ENCODE measurements at regions of chr19 and their contacts with region 1.

Region 1: GRCh38 chr19:9342610-9343304 is 18.8 kb downstream of the ZNF559 start:
- DNase-seq: no peak
- H3K4me3 ChIP-seq: no peak overlapping the region
- H3K27ac ChIP-seq: no peak overlapping the region
- H3K4me1 ChIP-seq: no peaks in the 10 kb centered on the region
- H3K27me3 ChIP-seq: no peaks in the 10 kb centered on the region
- CTCF ChIP-seq: no peak

Region 2: DNA sequence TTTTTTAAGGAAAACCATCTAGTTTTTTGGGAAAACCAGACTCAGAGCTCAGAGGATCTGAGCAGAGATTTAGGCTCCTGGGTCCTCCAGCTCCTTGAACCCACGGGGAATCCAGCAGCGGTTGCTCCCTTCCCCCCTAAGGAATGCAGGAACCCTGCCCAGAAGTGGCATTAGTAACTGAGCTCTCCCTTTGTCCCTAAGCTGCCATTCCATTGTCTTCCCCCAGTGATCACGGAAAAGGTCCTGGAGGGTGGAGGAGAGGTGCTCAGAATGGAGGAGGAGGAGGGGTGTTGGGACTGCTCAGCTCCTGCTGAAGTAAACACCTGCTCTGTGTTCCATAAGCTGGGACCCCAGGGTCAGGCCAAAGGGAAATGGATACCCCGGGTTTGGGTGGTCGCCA is 272.7 kb before region 1 on chr19:
- CTCF ChIA-PET with region 1: no interaction called
- dilution Hi-C with region 1: no loop called
- in situ Hi-C with region 1: no loop called
- intact Hi-C with region 1: no loop called
- DNase-seq: no peak
- H3K4me3 ChIP-seq: no peak overlapping the region
- H3K27ac ChIP-seq: no peak overlapping the region
- H3K4me1 ChIP-seq: peaks cover 5% of the 10 kb centered on the region
- H3K27me3 ChIP-seq: no peaks in the 10 kb centered on the region
- CTCF ChIP-seq: no peak

Region 3: DNA sequence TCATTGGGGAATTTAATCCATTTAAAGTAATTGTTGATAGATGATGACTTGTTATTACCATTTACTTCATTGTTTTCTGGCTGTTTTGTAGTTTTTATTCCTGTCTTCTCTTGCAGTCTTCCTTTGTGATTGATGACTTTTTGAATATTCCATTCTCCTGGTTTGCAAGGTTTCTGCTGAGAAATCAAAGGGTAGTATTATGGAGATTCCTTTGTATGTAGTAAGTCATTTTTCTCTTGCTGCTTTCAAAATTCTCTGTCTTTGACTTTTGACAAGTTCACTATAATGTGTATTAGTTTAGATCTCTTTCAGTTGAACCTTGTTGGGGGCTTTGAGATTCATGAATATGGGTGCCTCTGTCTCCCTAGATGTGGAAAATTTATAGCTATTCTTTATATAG is 12.8 kb before region 1 on chr19:
- CTCF ChIA-PET with region 1: no interaction called
- dilution Hi-C with region 1: no loop called
- in situ Hi-C with region 1: no loop called
- intact Hi-C with region 1: loop called (anchors 2 kb)
- DNase-seq: no peak
- H3K4me3 ChIP-seq: no peak overlapping the region
- H3K27ac ChIP-seq: no peak overlapping the region
- H3K4me1 ChIP-seq: no peaks in the 10 kb centered on the region
- H3K27me3 ChIP-seq: no peaks in the 10 kb centered on the region
- CTCF ChIP-seq: no peak

Region 4: DNA sequence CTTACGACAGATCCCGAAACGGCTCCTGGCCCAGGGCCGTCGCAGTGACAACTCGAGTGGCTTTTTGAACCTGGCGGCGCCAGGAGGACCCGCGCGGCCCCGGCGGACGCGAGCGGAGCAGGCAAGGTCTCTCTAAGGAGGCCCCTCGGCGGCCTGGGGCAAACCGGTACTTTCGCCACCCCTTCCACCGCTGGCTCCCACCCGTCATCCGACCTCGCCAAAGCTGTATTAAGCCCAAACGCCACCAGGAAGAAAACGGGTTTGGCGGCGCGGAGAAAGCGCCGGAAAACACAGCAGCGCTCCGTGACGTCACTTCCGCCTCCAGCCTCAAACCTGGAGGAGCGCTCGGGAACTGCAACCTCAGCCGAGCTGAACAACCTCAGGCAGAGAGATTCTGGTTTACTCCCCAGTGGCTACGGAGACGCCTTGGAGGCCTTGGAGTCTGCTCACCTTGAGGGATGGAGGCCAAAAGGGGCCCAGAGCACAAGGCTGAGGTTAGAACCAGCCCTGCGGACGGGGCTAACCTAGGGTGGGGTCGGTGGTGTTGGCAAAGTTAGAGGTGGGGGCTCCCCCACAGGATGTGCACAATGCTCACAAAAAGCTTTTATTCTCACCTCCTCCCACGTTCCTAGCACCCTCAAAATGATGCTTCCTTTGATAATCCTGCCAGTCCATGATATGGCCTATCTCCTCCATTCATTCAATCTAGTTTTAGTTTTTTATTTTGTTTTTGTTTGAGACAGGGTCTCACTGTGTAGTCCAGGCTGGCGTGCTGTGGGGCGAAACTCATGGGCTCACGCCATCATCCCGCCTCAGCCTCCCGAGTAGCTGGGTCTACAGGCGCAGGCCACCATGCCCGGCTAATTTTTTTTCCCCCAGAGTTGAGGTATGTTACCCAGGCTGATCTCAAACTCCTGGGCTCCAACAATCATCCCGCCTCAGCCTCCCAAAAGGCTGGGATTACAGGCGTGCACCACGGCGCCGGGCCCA is 92.8 kb after region 1 on chr19 and contains the start of gene ZNF266:
- CTCF ChIA-PET with region 1: no interaction called
- dilution Hi-C with region 1: no loop called
- in situ Hi-C with region 1: no loop called
- intact Hi-C with region 1: no loop called
- DNase-seq: peak; percentile 87
- H3K4me3 ChIP-seq: peak within 1 kb of the TSS; percentile 70 to 95 (median 84)
- H3K27ac ChIP-seq: peak within 1 kb of the TSS; percentile 78
- H3K4me1 ChIP-seq: no peaks in the 10 kb centered on the region
- H3K27me3 ChIP-seq: no peaks in the 10 kb centered on the region
- CTCF ChIP-seq: peak; percentile 53 to 74
- total RNA-seq, gene ZNF266: 10.5 to 14.2 TPM

Region 5: DNA sequence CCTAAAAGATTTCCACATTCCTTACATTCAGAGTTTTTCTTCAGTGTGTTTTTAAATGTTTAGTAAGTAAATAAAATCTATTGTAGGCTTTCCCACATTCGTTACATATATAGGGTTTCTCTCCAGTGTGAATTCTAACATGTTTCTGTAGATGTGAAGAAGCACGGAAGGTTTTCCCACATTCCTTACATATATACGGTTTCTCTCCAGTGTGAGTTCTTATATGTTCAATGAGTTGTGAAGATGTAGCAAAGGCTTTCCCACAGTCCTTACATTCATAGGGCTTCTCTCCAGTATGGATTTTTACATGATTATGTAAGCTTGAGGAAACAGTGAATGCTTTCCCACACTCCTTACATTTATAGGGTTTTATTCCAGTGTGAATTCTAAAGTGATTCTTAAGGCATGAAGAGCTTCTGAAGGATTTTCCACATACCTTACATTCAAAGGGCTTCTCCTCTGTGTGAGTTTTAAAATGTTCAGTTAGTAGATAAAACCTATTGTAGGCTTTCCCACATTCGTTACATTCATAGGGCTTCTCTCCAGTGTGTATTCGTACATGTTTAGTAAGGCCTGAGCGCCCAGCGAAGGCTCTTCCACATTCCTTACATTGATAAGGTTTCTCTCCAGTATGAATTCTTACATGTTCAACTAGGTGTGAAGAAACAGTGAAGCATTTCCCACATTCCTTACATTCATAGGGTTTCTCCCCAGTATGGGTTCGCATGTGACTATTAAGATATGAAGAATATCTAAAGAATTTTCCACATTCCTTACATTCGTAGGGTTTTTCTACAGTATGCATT is 223.3 kb after region 1 on chr19:
- CTCF ChIA-PET with region 1: no interaction called
- dilution Hi-C with region 1: no loop called
- in situ Hi-C with region 1: loop called in 1 of 2 experiments (anchors 25 kb)
- intact Hi-C with region 1: no loop called
- DNase-seq: no peak
- H3K4me3 ChIP-seq: no peak overlapping the region
- H3K27ac ChIP-seq: no peak overlapping the region
- H3K4me1 ChIP-seq: no peaks in the 10 kb centered on the region
- H3K27me3 ChIP-seq: no peaks in the 10 kb centered on the region
- CTCF ChIP-seq: no peak

Region 6: GRCh38 chr19:10543420-10544241 is 1200.9 kb after region 1 on chr19 and contains the start of gene ATG4D:
- CTCF ChIA-PET with region 1: no interaction called
- dilution Hi-C with region 1: no loop called
- in situ Hi-C with region 1: no loop called
- intact Hi-C with region 1: no loop called
- DNase-seq: peak; percentile 68
- H3K4me3 ChIP-seq: peak within 1 kb of the TSS; percentile 69 to 82 (median 82)
- H3K27ac ChIP-seq: peak within 1 kb of the TSS; percentile 57
- H3K4me1 ChIP-seq: peaks cover 6% of the 10 kb centered on the region
- H3K27me3 ChIP-seq: no peaks in the 10 kb centered on the region
- CTCF ChIP-seq: no peak
- total RNA-seq, gene ATG4D: 20.7 to 28.9 TPM

Measured in mammary epithelial cell (primary cell).